Activated CD8-positive, alpha-beta T cell treated with anti-CD3 and anti-CD28 coated beads, Interleukin-2, amount 10 ng/mL, durations not matched to agents 7 days and 5 days (primary cell): ENCODE measurements at regions of chr22 and their contacts with region 1.

Region 1: DNA sequence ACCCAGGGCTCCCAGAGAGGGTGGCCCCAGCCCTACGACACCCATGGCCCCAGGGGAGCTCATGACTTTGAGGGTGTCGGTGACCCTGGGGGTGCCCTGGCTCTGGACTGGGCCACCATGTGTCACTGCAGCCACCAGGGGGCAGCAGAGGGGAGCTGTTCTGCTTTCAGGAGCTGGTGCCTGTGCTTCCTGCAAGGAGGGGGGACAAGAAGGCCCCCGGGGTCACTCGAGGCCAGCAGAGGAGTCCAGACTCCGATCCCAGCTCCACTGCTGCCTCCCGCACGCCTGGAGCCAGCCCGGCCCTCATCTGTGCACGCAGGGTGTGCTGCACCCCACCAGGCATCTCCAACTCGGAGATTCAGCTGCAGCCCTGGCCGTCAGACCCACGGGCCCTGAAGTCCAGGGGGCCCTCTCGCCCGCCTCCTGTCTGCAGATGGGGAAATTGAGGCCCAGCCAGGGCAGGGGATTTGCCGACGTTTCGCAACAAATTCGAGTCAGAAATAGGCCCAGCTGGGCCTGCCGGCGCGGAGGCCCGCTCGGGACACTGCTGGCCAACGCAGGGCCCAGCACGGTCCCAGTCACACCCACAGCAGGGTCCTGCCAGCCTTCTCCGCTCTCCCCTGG is 29.5 kb upstream of the WNT7B start:
- DNase-seq: peak; percentile 90
- ATAC-seq: peak; percentile 91
- H3K4me3 Mint-ChIP-seq: no peak overlapping the region
- H3K27ac Mint-ChIP-seq: peak overlapping the region; percentile 6
- H3K4me1 Mint-ChIP-seq: peaks cover 20% of the 10 kb centered on the region
- H3K27me3 Mint-ChIP-seq: no peaks in the 10 kb centered on the region

Region 2: GRCh38 chr22:46027192-46028105 is 21.0 kb after region 1 on chr22:
- CTCF ChIA-PET with region 1: interaction called, 28 read pairs
- POLR2A ChIA-PET with region 1: no interaction called
- DNase-seq: no peak
- ATAC-seq: no peak
- H3K4me3 Mint-ChIP-seq: no peak overlapping the region
- H3K27ac Mint-ChIP-seq: no peak overlapping the region
- H3K4me1 Mint-ChIP-seq: peaks cover 16% of the 10 kb centered on the region
- H3K27me3 Mint-ChIP-seq: peaks cover 36% of the 10 kb centered on the region

Region 3: DNA sequence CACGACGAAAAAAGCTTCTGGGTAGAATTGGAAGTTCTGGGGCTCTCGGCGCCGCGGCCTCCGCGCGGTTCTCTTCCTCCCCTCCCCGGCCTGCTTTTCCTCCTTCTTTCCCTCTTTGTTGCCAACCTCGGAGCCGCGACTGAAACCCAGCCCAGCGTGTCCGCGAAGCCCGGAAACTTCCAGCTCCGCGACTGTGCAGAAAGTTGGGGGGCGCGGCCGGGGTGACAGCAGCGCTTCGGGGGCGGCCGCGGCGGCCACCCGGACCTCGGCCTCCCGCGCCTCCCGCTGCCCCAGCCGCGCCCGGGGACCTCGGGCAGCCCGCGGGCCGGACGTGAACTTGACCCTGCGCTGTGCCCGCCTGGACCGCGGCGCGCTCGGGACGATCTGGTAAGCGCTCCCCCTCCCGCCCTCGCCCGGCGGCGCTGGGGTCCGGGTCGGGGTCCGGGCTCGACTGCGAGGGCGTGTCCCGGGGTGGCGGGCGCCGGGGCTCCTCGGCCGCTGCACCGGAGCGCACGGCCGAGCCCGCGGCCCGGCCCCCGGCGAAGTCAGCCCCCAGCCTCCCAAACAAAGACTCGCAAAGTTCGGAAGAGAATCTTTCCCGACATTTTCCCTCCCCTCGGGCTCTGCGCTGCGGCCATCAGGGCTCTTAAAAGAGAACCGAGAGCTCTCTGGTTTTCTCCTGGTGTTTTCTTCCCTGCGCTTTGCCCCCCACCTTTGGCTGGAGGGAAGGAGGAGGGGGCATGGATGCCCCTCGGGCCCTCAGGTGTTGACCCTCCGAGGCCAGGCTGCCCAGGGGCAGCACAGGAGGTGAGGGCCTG is 38.3 kb after region 1 on chr22:
- CTCF ChIA-PET with region 1: interaction called, 13 read pairs
- POLR2A ChIA-PET with region 1: no interaction called
- DNase-seq: peak; percentile 41
- ATAC-seq: peak; percentile 75
- H3K4me3 Mint-ChIP-seq: peak overlapping the region; percentile 78
- H3K27ac Mint-ChIP-seq: peak overlapping the region; percentile 57
- H3K4me1 Mint-ChIP-seq: peaks cover 12% of the 10 kb centered on the region
- H3K27me3 Mint-ChIP-seq: peaks cover 7% of the 10 kb centered on the region

Region 4: GRCh38 chr22:46071451-46072109 is 65.1 kb after region 1 on chr22:
- CTCF ChIA-PET with region 1: interaction called, 23 read pairs
- POLR2A ChIA-PET with region 1: interaction called, 4 read pairs
- DNase-seq: peak; percentile 52
- ATAC-seq: peak; percentile 25
- H3K4me3 Mint-ChIP-seq: peak overlapping the region; percentile 78
- H3K27ac Mint-ChIP-seq: peak overlapping the region; percentile 80
- H3K4me1 Mint-ChIP-seq: peaks cover 42% of the 10 kb centered on the region
- H3K27me3 Mint-ChIP-seq: peaks cover 3% of the 10 kb centered on the region

Region 5: GRCh38 chr22:46116491-46116958 is 110.0 kb after region 1 on chr22:
- CTCF ChIA-PET with region 1: interaction called, 107 read pairs
- POLR2A ChIA-PET with region 1: interaction called, 4 read pairs
- DNase-seq: peak; percentile 87
- ATAC-seq: peak; percentile 92
- H3K4me3 Mint-ChIP-seq: no peak overlapping the region
- H3K27ac Mint-ChIP-seq: no peak overlapping the region
- H3K4me1 Mint-ChIP-seq: peaks cover 9% of the 10 kb centered on the region
- H3K27me3 Mint-ChIP-seq: no peaks in the 10 kb centered on the region